ENCODE measurements at regions of chr22 and their contacts with region 1.

Region 1: GRCh38 chr22:46150034-46150654 is at the start of gene PPARA:
- DNase-seq: peak in 1 of 2 donors; percentile 94
- H3K4me3 ChIP-seq: peak within 1 kb of the TSS; percentile 91 to 94
- H3K27ac ChIP-seq: peak within 1 kb of the TSS; percentile 93
- H3K4me1 ChIP-seq: peaks cover 0 to 12% of the 10 kb centered on the region in 2 donors
- H3K27me3 ChIP-seq: no peaks in the 10 kb centered on the region
- CTCF ChIP-seq: no peak
- total RNA-seq, gene PPARA: 20.1 TPM

Region 2: DNA sequence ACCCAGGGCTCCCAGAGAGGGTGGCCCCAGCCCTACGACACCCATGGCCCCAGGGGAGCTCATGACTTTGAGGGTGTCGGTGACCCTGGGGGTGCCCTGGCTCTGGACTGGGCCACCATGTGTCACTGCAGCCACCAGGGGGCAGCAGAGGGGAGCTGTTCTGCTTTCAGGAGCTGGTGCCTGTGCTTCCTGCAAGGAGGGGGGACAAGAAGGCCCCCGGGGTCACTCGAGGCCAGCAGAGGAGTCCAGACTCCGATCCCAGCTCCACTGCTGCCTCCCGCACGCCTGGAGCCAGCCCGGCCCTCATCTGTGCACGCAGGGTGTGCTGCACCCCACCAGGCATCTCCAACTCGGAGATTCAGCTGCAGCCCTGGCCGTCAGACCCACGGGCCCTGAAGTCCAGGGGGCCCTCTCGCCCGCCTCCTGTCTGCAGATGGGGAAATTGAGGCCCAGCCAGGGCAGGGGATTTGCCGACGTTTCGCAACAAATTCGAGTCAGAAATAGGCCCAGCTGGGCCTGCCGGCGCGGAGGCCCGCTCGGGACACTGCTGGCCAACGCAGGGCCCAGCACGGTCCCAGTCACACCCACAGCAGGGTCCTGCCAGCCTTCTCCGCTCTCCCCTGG is 143.7 kb before region 1 on chr22:
- intact Hi-C with region 1: loop called (anchors 1 kb)
- DNase-seq: peak; percentile 75 to 95
- H3K4me3 ChIP-seq: peak overlapping the region; percentile 31 to 37
- H3K27ac ChIP-seq: peak overlapping the region; percentile 97 to 99
- H3K4me1 ChIP-seq: peaks cover 21 to 28% of the 10 kb centered on the region in 2 donors
- H3K27me3 ChIP-seq: no peaks in the 10 kb centered on the region
- CTCF ChIP-seq: peak; percentile 90 to 98 (median 95)

Region 3: DNA sequence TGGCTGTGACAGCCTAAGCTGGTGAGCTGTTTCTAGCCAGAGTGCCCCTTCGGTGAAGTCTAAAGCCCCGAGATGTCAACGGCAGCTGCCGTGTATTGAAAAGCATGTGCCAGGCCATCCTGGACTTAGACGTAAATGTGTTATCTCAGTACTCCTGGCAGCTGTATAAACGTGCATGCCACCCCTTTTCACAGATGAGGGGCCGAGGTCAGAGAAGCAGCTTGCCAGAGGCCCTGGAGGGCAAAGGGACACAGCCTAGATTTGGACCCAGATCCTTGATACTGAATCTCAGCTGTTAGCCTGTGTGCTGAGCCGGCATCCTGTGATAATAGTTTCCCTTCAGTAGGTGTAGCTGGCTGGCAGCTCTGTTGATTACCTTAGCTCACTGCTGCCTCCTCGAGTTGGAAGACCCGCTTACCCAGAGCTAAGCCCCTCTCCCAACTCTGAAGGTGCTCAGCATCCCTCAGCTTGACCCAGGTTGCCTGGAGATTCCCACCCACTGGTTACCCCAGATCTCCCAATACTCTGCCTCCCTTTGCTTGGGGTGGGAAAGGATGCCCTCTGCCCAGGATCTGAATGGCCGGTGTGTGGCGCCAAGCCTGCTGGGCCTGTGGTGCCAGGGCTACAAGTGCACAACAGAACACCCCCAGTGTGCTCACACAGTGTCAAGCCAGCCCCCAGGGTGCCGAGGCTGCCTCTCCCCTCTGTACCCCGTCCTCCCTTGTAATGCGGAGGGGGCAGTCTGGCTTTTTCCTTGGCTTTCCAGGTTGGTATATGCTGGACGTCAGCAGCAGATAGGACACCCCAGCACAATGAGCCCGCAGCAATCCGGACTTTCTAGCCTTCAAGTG is 113.4 kb before region 1 on chr22:
- intact Hi-C with region 1: no loop called
- DNase-seq: peak in 1 of 2 donors; percentile 69
- H3K4me3 ChIP-seq: peak overlapping the region; percentile 74 to 88
- H3K27ac ChIP-seq: peak overlapping the region; percentile 94 to 98
- H3K4me1 ChIP-seq: peaks cover 6 to 11% of the 10 kb centered on the region in 2 donors
- H3K27me3 ChIP-seq: no peaks in the 10 kb centered on the region
- CTCF ChIP-seq: no peak

Region 4: GRCh38 chr22:46122511-46122971 is 27.6 kb before region 1 on chr22:
- intact Hi-C with region 1: loop called (anchors 2 kb)
- DNase-seq: no peak
- H3K4me3 ChIP-seq: peak overlapping the region in 1 of 2 donors; percentile 14
- H3K27ac ChIP-seq: no peak overlapping the region
- H3K4me1 ChIP-seq: peaks cover 0 to 4% of the 10 kb centered on the region in 2 donors
- H3K27me3 ChIP-seq: no peaks in the 10 kb centered on the region
- CTCF ChIP-seq: peak; percentile 87 to 98 (median 97)

Region 5: GRCh38 chr22:46162771-46163556 is 12.8 kb after region 1 on chr22:
- intact Hi-C with region 1: no loop called
- DNase-seq: peak in 1 of 2 donors; percentile 33
- H3K4me3 ChIP-seq: no peak overlapping the region
- H3K27ac ChIP-seq: no peak overlapping the region
- H3K4me1 ChIP-seq: no peaks in the 10 kb centered on the region
- H3K27me3 ChIP-seq: no peaks in the 10 kb centered on the region
- CTCF ChIP-seq: no peak

Region 6: DNA sequence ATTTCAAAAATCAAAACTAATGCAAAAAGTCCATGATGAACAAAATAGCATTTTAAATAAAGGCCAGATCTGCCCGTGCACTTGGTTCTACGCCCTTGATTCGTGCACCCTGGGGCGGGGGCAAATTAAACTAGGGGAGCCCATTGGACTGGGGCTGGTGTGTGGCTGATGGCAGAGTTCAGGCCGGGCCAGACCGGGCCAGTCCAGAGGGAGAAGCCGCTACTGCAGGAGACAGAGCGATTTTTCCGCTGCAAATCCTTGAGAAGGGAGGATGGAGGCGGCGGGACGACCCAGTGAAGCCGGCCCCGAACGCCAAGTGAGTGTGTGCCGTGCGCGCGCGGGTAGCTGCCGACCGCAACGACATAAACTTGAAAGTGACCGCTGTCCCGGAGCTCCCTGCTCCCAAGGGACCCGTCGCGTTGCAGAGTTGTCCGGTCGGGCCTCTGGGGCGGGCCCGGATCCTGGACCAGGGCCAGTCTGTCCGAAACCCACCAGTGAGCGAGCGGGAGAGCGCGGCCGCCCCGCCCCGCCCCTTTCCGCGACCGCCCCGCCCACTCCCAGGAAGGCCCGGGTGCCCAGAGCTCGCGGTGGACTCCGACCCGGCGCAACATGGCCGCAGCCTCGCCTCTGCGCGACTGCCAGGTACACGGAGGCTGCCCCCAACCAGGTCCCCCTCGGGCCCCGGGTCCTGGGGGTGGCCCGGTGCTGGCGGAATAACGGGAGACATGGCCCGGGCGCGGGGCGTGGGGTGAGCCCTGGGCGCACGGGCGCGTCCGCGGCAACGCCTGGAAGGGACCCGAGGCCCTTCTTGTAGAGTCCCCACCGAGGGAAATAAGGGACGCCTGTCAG is 117.5 kb after region 1 on chr22 and contains the start of gene TTC38:
- intact Hi-C with region 1: loop called (anchors 2 kb)
- DNase-seq: peak; percentile 71 to 94
- H3K4me3 ChIP-seq: peak within 1 kb of the TSS; percentile 58 to 78
- H3K27ac ChIP-seq: peak within 1 kb of the TSS; percentile 85 to 88
- H3K4me1 ChIP-seq: peaks cover 0 to 14% of the 10 kb centered on the region in 2 donors
- H3K27me3 ChIP-seq: no peaks in the 10 kb centered on the region
- CTCF ChIP-seq: no peak
- total RNA-seq, gene TTC38: 55.3 TPM

Region 7: GRCh38 chr22:46335201-46336118 is 185.3 kb after region 1 on chr22 and contains the start of gene TRMU:
- intact Hi-C with region 1: loop called (anchors 5 kb)
- DNase-seq: peak; percentile 23 to 88
- H3K4me3 ChIP-seq: peak within 1 kb of the TSS; percentile 71 to 76
- H3K27ac ChIP-seq: peak within 1 kb of the TSS; percentile 89 to 91
- H3K4me1 ChIP-seq: peaks cover 6 to 7% of the 10 kb centered on the region in 2 donors
- H3K27me3 ChIP-seq: no peaks in the 10 kb centered on the region
- CTCF ChIP-seq: no peak
- total RNA-seq, gene TRMU: 13.5 TPM